Ascending aorta (tissue), 2 donors: ENCODE measurements at regions of chrX and their contacts with region 1.

Region 1: GRCh38 chrX:147763131-147763530 is 148.6 kb upstream of the FMR1 start:
- DNase-seq: no peak
- H3K4me3 ChIP-seq: no peak overlapping the region
- H3K27ac ChIP-seq: no peak overlapping the region
- H3K4me1 ChIP-seq: no peaks in the 10 kb centered on the region
- H3K27me3 ChIP-seq: no peaks in the 10 kb centered on the region
- CTCF ChIP-seq: no peak

Region 2: DNA sequence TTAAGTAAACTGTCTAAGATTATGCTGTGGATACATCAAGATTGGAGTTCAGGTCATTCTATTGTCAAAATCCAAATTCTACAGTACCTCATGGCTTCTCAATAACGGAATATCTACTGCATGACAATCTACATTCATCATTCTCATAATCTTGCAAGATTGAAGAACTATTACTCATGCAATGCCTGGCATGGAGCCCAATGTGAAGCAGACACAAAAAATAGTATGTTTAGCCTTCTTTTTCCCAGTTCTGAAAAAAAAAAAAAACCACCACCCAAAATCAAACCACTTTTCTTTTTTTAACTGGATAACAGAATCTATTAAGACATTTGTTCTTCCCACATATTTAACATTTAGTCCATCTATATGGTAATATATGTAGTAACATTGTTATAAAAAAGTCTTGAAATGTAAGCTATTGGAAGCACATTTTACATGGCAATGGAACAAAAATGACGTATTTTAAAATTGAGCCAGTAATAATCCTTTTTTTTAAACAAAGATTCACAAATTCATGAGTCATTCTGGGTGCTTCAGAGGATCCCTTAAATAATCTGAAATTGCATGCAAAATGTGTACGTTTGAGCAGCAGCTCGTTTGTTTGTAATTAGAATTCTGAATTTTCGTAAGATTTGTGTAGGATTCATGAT is 83.7 kb before region 1 on chrX:
- intact Hi-C with region 1: no loop called
- DNase-seq: no peak
- H3K4me3 ChIP-seq: no peak overlapping the region
- H3K27ac ChIP-seq: no peak overlapping the region
- H3K4me1 ChIP-seq: no peaks in the 10 kb centered on the region
- H3K27me3 ChIP-seq: no peaks in the 10 kb centered on the region
- CTCF ChIP-seq: no peak

Region 3: GRCh38 chrX:147827069-147827468 is 63.9 kb after region 1 on chrX:
- intact Hi-C with region 1: loop called (anchors 2 kb)
- DNase-seq: no peak
- H3K4me3 ChIP-seq: no peak overlapping the region
- H3K27ac ChIP-seq: no peak overlapping the region
- H3K4me1 ChIP-seq: no peaks in the 10 kb centered on the region
- H3K27me3 ChIP-seq: no peaks in the 10 kb centered on the region
- CTCF ChIP-seq: no peak

Region 4: DNA sequence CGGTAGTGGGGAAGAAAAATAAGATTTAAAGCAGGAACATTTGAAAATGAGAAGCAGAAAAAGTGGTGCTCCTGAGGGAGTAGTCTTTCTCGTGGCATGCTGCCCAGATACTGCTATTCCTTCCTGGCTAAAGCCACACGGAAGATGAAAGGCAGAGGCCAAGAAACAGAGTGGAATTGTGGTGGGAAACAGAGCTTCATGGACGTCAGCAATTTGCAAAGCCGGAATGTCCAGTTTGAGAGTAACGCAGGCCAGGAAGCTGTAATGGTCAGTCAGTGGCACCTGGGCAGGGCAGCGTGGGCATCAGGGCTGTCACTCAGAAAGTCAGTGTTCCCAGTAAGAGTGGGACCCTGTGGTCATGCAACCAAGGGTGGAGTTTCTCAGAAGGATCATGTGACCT is 84.9 kb after region 1 on chrX:
- intact Hi-C with region 1: no loop called
- DNase-seq: no peak
- H3K4me3 ChIP-seq: no peak overlapping the region
- H3K27ac ChIP-seq: no peak overlapping the region
- H3K4me1 ChIP-seq: no peaks in the 10 kb centered on the region
- H3K27me3 ChIP-seq: no peaks in the 10 kb centered on the region
- CTCF ChIP-seq: no peak